Activated CD4-positive, alpha-beta T cell treated with anti-CD3 and anti-CD28 coated beads for 36 hours (primary cell): ENCODE measurements at regions of chrX and their contacts with region 1.

Region 1: DNA sequence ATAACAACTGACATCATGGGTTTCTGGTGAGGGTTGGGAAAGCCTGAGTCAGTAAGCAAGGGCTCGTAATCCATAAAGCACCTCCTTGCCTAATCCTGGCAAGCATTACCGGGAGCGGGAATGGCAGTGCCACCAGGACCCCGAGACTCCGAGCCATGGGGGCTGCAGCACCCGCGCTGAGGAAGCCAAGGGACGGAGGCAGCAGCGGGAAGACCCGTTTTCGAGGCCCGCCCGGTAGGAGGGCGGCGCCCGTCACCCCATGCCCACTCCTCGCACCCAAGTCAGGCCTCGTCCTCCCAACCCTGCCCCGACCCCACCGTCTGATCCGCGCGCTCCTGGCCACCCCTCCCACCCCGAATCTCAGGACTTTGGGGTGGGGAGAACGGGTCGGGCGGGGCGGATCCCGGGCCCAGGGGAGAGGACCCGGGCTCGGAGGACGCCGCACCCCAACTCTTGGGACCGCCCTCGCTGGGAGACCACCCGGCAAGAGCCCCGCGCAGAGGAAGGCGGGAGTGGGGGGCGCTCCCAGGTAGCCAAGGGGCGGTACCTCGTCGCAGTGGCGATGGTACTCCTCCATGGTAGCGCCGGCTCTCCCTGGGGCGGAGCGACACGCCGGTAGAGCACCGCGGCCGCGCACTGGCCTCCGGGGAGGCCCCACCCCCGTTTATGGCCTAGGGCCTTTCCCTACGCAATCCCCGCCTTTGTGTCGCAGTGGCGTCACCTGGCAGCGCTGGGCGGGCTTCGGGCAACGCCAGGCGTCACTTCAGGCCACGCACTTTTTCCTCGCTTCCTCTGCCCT is at the start of gene DYNLT3:
- DNase-seq: peak; percentile 88
- ATAC-seq: peak; percentile 93
- H3K4me3 Mint-ChIP-seq: peak within 1 kb of the TSS; percentile 69
- H3K27ac Mint-ChIP-seq: peak within 1 kb of the TSS; percentile 87
- H3K4me1 Mint-ChIP-seq: peaks cover 27% of the 10 kb centered on the region
- H3K27me3 Mint-ChIP-seq: no peaks in the 10 kb centered on the region
- total RNA-seq, gene DYNLT3: 16.1 to 16.8 TPM

Region 2: GRCh38 chrX:37755025-37755424 is 92.1 kb before region 1 on chrX:
- CTCF ChIA-PET with region 1: no interaction called
- POLR2A ChIA-PET with region 1: no interaction called
- intact Hi-C with region 1: loop called in 1 of 2 experiments (anchors 2 kb)
- DNase-seq: peak; percentile 15
- ATAC-seq: peak; percentile 73
- H3K4me3 Mint-ChIP-seq: no peak overlapping the region
- H3K27ac Mint-ChIP-seq: no peak overlapping the region
- H3K4me1 Mint-ChIP-seq: peaks cover 12% of the 10 kb centered on the region
- H3K27me3 Mint-ChIP-seq: no peaks in the 10 kb centered on the region